ENCODE measurements at regions of chr6 and their contacts with region 1.

Region 1: GRCh38 chr6:167860550-167861226 is 34.0 kb downstream of the AFDN start:
- DNase-seq: no peak
- H3K4me3 ChIP-seq: no peak overlapping the region
- H3K27ac ChIP-seq: no peak overlapping the region
- H3K4me1 ChIP-seq: peaks cover 8% of the 10 kb centered on the region
- H3K27me3 ChIP-seq: no peaks in the 10 kb centered on the region
- CTCF ChIP-seq: no peak
- EP300 ChIP-seq: no peak
- POLR2A ChIP-seq: no peak

Region 2: DNA sequence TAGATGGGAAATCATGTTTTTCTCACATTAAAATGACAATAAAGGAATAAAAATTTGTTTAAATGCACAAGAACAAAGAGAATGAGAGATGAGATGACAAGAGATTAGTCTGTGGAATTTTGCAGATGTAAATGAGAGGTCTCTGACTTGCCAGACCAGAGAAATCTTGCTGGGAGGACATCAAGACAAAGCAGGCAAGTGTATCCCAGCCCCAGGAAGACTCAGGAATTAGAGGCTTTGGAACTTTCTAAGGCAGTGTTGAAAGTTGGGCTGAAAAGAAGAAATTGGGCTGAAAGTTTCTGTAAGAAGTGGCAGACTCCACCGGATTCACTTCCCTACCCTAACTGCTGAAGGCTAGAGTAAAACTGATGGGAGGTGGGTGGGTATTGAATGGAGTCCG is 20.6 kb after region 1 on chr6:
- intact Hi-C with region 1: loop called in 1 of 4 experiments (anchors 1 kb)
- DNase-seq: no peak
- H3K4me3 ChIP-seq: no peak overlapping the region
- H3K27ac ChIP-seq: no peak overlapping the region
- H3K4me1 ChIP-seq: no peaks in the 10 kb centered on the region
- H3K27me3 ChIP-seq: no peaks in the 10 kb centered on the region
- CTCF ChIP-seq: no peak
- EP300 ChIP-seq: no peak
- POLR2A ChIP-seq: no peak

Region 3: GRCh38 chr6:167898673-167899311 is 38.1 kb after region 1 on chr6:
- intact Hi-C with region 1: loop called in 1 of 4 experiments (anchors 2 kb)
- DNase-seq: no peak
- H3K4me3 ChIP-seq: no peak overlapping the region
- H3K27ac ChIP-seq: no peak overlapping the region
- H3K4me1 ChIP-seq: no peaks in the 10 kb centered on the region
- H3K27me3 ChIP-seq: no peaks in the 10 kb centered on the region
- CTCF ChIP-seq: peak; percentile 43 to 60 (median 54)
- EP300 ChIP-seq: no peak
- POLR2A ChIP-seq: no peak